AG04449 (cell line): ENCODE measurements at regions of chr11 and their contacts with region 1.

Region 1: DNA sequence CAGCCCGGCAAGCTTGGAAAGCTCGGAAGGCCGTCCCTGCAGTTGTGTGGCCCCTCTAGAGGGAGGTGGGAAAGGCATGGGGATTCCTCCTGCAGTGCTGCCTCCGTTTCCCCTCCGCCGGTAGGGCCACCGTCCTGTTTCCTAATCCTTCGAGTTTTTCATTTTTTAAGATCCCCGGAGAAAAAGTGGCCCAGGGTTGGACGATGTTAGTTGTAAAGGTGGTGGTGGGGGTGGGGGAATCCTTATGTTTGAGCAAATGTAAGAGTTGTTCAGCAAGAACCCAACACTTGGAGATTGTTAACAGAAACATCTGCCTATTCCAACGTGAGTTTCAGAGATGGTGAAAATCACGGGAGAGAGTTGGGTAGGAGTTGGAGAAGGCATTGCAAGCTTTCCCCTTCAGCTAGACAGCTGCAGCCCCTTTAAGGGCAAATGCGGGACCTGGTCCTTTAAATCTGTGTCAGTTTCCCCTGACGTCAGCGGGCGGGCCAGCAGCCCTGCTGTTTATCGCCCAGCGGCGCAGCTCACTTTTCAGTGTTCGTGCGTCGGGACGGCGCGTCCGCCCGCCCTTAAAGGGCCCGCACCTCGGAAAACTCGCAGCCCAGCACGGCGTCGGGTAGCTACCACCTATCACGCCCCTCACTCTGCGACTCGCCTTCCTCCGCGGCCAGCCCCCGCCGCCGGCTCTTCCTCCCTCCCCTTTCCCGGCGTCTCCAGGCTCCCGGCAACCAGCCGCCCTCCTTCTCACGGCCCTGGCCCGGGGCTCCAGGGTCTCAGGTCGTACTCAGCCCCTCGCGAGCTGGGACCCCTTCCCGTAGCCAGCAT is at the start of gene SIDT2:
- DNase-seq: no peak
- H3K4me3 ChIP-seq: peak within 1 kb of the TSS; percentile 85
- CTCF ChIP-seq: no peak

Region 2: GRCh38 chr11:117143871-117144476 is 34.4 kb before region 1 on chr11 and contains the start of gene PAFAH1B2:
- CTCF ChIA-PET with region 1: interaction called, 7 read pairs
- POLR2A ChIA-PET with region 1: interaction called, 19 read pairs
- DNase-seq: no peak
- H3K4me3 ChIP-seq: peak within 1 kb of the TSS; percentile 89
- CTCF ChIP-seq: no peak

Region 3: GRCh38 chr11:117199061-117199915 is 20.9 kb after region 1 on chr11 and contains the start of gene TAGLN:
- CTCF ChIA-PET with region 1: interaction called, 133 read pairs
- POLR2A ChIA-PET with region 1: interaction called, 76 read pairs
- DNase-seq: peak; percentile 87
- H3K4me3 ChIP-seq: peak within 1 kb of the TSS; percentile 99
- CTCF ChIP-seq: no peak